ENCODE measurements at regions of chr10 and their contacts with region 1.

Region 1: DNA sequence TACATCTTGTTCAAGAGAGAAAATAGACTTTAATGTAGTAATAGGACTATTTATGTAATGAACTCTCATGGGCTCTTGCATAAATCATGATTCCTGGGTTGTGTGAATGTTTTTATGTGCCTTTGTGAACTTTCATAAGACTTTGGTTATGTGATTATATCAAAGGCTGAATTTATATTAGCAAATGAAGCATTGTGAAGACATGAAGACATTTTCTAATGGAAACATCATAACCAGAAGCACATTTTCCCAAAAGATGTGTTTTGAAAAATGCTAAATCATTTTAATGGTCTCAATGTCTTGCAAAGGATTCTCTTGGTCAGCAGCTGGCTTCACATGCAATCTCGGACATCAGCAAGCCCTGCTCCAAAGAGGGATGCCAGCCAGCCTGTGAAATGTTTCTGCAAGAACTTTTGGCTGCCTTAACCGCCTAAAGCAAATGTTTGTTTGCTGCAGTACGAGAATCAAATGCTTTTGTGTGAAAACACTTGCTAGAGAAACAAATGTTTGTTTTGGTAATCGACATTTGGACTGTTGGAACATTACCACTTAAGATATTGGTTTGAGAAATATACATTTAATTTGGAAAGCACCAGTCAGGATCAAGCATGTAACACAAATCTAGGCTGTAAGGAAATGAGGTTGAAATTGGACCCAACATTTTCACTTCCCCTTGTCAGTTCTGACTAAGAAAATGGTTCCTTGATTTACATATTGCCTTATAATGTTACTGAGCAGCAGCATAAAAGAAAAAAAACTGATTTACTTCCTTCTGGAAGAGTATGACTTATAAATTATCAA is 102.1 kb downstream of the RTKN2 start:
- DNase-seq: peak; percentile 72
- ATAC-seq: peak; percentile 92
- H3K4me3 ChIP-seq: peak overlapping the region in 1 of 5 experiments; percentile 34
- H3K4me3 Mint-ChIP-seq: peak overlapping the region; percentile 1
- H3K27ac ChIP-seq: peak overlapping the region in 1 of 2 donors; percentile 4
- H3K27ac Mint-ChIP-seq: peak overlapping the region; percentile 59
- H3K4me1 ChIP-seq: peaks cover 25 to 28% of the 10 kb centered on the region in 2 donors
- H3K4me1 Mint-ChIP-seq: peaks cover 29% of the 10 kb centered on the region
- H3K27me3 ChIP-seq: no peaks in the 10 kb centered on the region
- H3K27me3 Mint-ChIP-seq: no peaks in the 10 kb centered on the region
- CTCF ChIP-seq: no peak

Region 2: GRCh38 chr10:61793760-61794703 is 372.5 kb before region 1 on chr10:
- CTCF ChIA-PET with region 1: no interaction called
- POLR2A ChIA-PET with region 1: no interaction called
- intact Hi-C with region 1: no loop called
- DNase-seq: no peak
- ATAC-seq: no peak
- H3K4me3 ChIP-seq: no peak overlapping the region
- H3K4me3 Mint-ChIP-seq: no peak overlapping the region
- H3K27ac ChIP-seq: no peak overlapping the region
- H3K27ac Mint-ChIP-seq: no peak overlapping the region
- H3K4me1 ChIP-seq: no peaks in the 10 kb centered on the region
- H3K4me1 Mint-ChIP-seq: no peaks in the 10 kb centered on the region
- H3K27me3 ChIP-seq: no peaks in the 10 kb centered on the region
- H3K27me3 Mint-ChIP-seq: no peaks in the 10 kb centered on the region
- CTCF ChIP-seq: no peak

Region 3: GRCh38 chr10:62025901-62026879 is 140.3 kb before region 1 on chr10:
- CTCF ChIA-PET with region 1: no interaction called
- POLR2A ChIA-PET with region 1: no interaction called
- intact Hi-C with region 1: no loop called
- DNase-seq: no peak
- ATAC-seq: no peak
- H3K4me3 ChIP-seq: no peak overlapping the region
- H3K4me3 Mint-ChIP-seq: peak overlapping the region; percentile 24
- H3K27ac ChIP-seq: peak overlapping the region in 1 of 2 donors; percentile 98
- H3K27ac Mint-ChIP-seq: peak overlapping the region; percentile 96
- H3K4me1 ChIP-seq: peaks cover 76 to 79% of the 10 kb centered on the region in 2 donors
- H3K4me1 Mint-ChIP-seq: peaks cover 88% of the 10 kb centered on the region
- H3K27me3 ChIP-seq: no peaks in the 10 kb centered on the region
- H3K27me3 Mint-ChIP-seq: no peaks in the 10 kb centered on the region
- CTCF ChIP-seq: no peak

Region 4: DNA sequence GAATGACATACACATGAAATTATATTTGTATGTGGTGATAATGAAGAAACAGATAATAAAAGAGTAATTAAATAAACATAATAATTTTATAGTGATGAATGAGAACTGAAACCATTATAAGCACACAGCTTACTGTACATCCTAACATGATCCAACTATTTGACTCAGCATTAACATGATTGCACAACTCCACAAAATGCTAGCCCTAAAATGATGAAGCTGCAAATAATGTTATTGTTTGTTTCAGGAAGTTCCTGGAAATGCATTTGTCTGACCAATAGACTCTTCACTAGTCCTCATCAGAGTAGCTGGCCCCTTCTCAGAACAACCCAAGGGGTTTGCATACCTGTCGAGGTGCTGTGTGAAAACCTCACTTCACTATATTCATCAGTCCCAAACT is 13.3 kb before region 1 on chr10:
- CTCF ChIA-PET with region 1: no interaction called
- POLR2A ChIA-PET with region 1: no interaction called
- intact Hi-C with region 1: no loop called
- DNase-seq: no peak
- ATAC-seq: no peak
- H3K4me3 ChIP-seq: no peak overlapping the region
- H3K4me3 Mint-ChIP-seq: no peak overlapping the region
- H3K27ac ChIP-seq: no peak overlapping the region
- H3K27ac Mint-ChIP-seq: no peak overlapping the region
- H3K4me1 ChIP-seq: peaks cover 6 to 7% of the 10 kb centered on the region in 2 donors
- H3K4me1 Mint-ChIP-seq: peaks cover 6% of the 10 kb centered on the region
- H3K27me3 ChIP-seq: no peaks in the 10 kb centered on the region
- H3K27me3 Mint-ChIP-seq: no peaks in the 10 kb centered on the region
- CTCF ChIP-seq: no peak

Region 5: GRCh38 chr10:62186999-62187677 is 20.6 kb after region 1 on chr10:
- CTCF ChIA-PET with region 1: no interaction called
- POLR2A ChIA-PET with region 1: no interaction called
- intact Hi-C with region 1: loop called (anchors 2 kb)
- DNase-seq: no peak
- ATAC-seq: no peak
- H3K4me3 ChIP-seq: no peak overlapping the region
- H3K4me3 Mint-ChIP-seq: no peak overlapping the region
- H3K27ac ChIP-seq: no peak overlapping the region
- H3K27ac Mint-ChIP-seq: no peak overlapping the region
- H3K4me1 ChIP-seq: peaks cover 6 to 9% of the 10 kb centered on the region in 2 donors
- H3K4me1 Mint-ChIP-seq: peaks cover 25% of the 10 kb centered on the region
- H3K27me3 ChIP-seq: no peaks in the 10 kb centered on the region
- H3K27me3 Mint-ChIP-seq: no peaks in the 10 kb centered on the region
- CTCF ChIP-seq: no peak

Measured in B cell (primary cell).